Mammary epithelial cell (primary cell): ENCODE measurements at regions of chr3 and their contacts with region 1.

Region 1: DNA sequence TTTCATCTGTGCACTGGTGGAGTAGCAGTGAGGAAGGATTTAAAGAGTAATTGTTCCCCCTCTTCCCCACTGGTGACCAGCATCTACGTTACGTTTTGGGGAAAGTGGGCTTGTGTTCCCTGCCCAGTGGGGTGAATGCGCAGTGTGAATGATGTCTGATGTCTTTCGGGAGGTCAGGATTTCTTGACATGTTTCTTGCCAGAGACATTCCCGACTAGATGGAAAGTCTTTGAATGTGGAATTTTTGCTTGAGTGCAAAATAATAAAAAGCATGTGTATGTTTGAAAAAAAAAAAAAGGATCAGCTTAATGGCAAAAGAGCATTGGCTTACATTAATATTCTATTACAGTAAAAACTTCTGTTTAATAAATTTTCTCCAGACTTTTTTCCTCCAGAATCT is 632.2 kb downstream of the FOXP1 start:
- DNase-seq: no peak
- H3K4me3 ChIP-seq: no peak overlapping the region
- H3K27ac ChIP-seq: no peak overlapping the region
- H3K4me1 ChIP-seq: no peaks in the 10 kb centered on the region
- H3K27me3 ChIP-seq: no peaks in the 10 kb centered on the region
- CTCF ChIP-seq: no peak

Region 2: GRCh38 chr3:70570584-70570983 is 380.7 kb before region 1 on chr3:
- CTCF ChIA-PET with region 1: no interaction called
- dilution Hi-C with region 1: no loop called
- in situ Hi-C with region 1: no loop called
- intact Hi-C with region 1: loop called (anchors 10 kb)
- DNase-seq: no peak
- H3K4me3 ChIP-seq: no peak overlapping the region
- H3K27ac ChIP-seq: no peak overlapping the region
- H3K4me1 ChIP-seq: no peaks in the 10 kb centered on the region
- H3K27me3 ChIP-seq: no peaks in the 10 kb centered on the region
- CTCF ChIP-seq: no peak

Region 3: DNA sequence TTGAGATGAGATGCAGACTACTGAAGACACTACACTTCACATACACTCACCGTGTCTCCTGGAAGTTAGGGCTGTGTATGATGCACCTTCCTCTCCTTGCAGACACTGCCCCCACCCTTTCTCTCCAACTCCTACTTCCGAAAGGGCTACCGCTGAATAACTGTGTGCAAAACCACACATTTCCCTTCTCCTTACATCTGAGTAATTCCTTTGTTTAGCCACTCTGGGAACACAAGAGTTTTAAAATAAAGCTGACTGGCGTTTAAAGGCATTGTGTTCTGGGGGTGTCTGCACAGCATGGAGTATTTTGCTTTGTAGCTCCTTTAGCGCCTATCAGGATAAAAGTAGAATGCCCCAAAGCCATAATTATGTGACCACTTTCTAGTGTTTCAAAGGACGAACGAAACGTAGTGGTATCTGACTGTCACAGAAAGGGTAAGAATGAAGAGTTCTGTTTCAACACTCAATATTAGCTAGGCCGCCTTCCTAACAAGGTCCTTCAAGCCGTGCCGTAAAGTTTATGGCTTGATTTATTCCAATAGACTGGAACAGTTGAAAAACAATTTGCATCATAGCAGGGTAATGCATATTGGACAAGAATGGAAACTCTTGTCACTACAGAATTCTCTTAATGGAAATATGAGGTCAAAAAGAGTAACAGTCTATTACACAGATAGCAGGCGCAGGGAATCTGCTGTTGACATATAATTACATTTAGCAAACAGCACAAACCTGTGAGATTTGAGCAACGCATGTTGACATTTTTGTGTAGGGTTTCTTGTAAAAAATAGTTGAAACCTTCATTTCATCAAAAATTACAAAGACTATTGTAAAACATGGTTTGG is 12.3 kb after region 1 on chr3:
- CTCF ChIA-PET with region 1: no interaction called
- dilution Hi-C with region 1: no loop called
- in situ Hi-C with region 1: no loop called
- intact Hi-C with region 1: no loop called
- DNase-seq: no peak
- H3K4me3 ChIP-seq: no peak overlapping the region
- H3K27ac ChIP-seq: no peak overlapping the region
- H3K4me1 ChIP-seq: no peaks in the 10 kb centered on the region
- H3K27me3 ChIP-seq: no peaks in the 10 kb centered on the region
- CTCF ChIP-seq: no peak